ENCODE measurements at regions of chr4 and their contacts with region 1.

Region 1: DNA sequence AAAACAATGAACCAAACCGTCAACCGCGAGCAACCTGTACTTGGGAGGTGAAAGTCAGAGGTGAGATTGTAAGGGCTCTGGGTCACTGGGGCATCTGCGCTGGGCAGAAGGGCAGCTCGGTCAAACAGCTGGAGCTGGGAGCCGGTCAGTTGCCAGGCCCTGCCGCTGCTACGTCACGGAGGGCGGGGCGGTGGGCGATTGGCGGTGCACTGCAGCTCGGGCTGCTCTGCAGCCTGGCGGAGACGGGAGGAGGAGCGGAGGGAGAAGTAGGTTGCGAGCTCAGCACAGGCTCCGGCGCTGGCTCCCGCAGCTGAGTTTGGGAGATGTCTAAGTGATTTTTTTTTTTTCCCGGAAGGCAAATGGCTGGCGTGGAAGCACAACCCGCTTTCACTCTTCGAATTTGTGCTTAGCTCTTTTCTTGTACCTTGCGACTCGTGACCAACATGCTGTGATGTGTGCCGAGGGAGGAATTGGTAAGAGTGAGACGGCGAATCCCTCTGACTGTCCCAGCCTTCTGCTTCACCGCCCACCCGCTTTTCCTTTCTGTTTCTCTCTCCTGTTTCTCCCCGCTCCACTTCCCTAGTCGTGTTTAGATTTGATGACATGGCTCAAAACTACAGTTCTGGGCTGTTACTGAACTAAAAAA is at the start of gene ATP10D:
- DNase-seq: peak; percentile 98
- ATAC-seq: peak; percentile 100
- total RNA-seq, gene ATP10D: 8.0 TPM

Region 2: GRCh38 chr4:47463235-47463956 is 21.8 kb before region 1 on chr4 and contains the start of gene COMMD8:
- intact Hi-C with region 1: loop called (anchors 2 kb)
- DNase-seq: peak; percentile 99
- ATAC-seq: peak; percentile 99
- total RNA-seq, gene COMMD8: 17.2 TPM

Region 3: GRCh38 chr4:47567511-47567910 is 82.3 kb after region 1 on chr4:
- intact Hi-C with region 1: loop called (anchors 5 kb)
- DNase-seq: no peak
- ATAC-seq: no peak